B cell (primary cell): ENCODE measurements at regions of chr6 and their contacts with region 1.

Region 1: DNA sequence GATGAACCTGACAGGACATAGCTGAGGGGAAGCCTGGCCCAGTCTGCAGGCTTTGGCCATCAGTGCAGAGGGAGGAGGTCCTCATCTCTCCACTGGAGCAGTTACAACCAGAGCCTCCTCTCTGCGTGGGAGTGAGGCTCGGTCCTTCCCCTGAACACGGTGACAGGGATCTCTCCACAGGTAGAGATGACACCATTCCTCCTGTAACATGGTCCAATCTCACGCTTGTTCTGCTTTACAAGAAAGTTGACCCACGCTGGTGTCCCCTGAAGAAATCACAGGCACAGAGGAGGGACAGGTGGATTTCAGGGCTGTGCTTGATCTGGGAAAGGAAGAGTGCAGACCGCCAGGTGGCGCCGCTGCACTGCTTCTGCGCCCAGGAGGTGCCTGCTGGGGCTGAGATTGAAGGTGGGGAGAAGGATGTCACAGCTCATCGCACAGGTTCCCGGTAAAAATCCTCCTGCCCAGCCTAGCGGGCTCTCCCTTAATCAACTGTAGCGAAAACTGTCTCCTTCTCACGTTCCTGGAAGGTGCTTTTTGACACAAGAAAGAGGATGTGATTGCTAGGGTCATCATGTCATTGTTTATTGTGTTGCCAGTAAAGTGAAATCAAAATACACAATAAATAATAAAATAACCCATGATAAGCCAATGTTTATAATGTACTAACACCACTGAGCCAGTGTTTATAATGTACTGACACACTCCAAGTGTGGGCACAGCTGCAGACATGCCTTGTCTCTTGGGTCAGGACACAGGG is 20.4 kb downstream of the HLA-G start:
- DNase-seq: peak; percentile 85
- ATAC-seq: peak; percentile 85
- H3K4me3 ChIP-seq: no peak overlapping the region
- H3K4me3 Mint-ChIP-seq: no peak overlapping the region
- H3K27ac ChIP-seq: no peak overlapping the region
- H3K27ac Mint-ChIP-seq: no peak overlapping the region
- H3K4me1 ChIP-seq: peaks cover 6 to 11% of the 10 kb centered on the region in 2 donors
- H3K4me1 Mint-ChIP-seq: peaks cover 9% of the 10 kb centered on the region
- H3K27me3 ChIP-seq: peaks cover 0 to 63% (median 45%) of the 10 kb centered on the region in 4 experiments
- H3K27me3 Mint-ChIP-seq: peaks cover 66% of the 10 kb centered on the region
- CTCF ChIP-seq: peak; percentile 92

Region 2: DNA sequence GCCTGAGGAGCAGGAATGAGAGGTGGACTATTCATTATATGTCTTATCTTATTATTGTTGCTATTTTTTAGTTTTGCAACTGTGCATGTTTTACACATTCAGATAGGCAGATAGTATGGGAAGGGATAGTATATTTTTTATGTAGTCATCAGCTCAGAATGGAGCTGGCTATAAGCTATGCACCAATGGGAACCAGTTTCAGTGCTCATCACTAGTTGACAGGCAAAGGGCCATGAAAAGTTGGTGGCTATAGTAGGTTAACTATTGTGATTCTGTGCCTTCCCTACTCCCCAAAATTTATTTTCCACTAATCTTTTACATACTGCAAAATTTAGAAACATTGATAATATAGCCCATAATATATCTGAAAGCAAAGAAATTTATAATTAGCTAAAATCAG is 283.2 kb before region 1 on chr6:
- CTCF ChIA-PET with region 1: no interaction called
- POLR2A ChIA-PET with region 1: no interaction called
- intact Hi-C with region 1: no loop called
- DNase-seq: peak; percentile 25
- ATAC-seq: no peak
- H3K4me3 ChIP-seq: no peak overlapping the region
- H3K4me3 Mint-ChIP-seq: no peak overlapping the region
- H3K27ac ChIP-seq: no peak overlapping the region
- H3K27ac Mint-ChIP-seq: no peak overlapping the region
- H3K4me1 ChIP-seq: peaks cover 9 to 10% of the 10 kb centered on the region in 2 donors
- H3K4me1 Mint-ChIP-seq: peaks cover 15% of the 10 kb centered on the region
- H3K27me3 ChIP-seq: peaks cover 0 to 3% (median 0%) of the 10 kb centered on the region in 4 experiments
- H3K27me3 Mint-ChIP-seq: peaks cover 21% of the 10 kb centered on the region
- CTCF ChIP-seq: no peak

Region 3: GRCh38 chr6:30006170-30007131 is 158.4 kb after region 1 on chr6:
- CTCF ChIA-PET with region 1: interaction called, 90 read pairs
- POLR2A ChIA-PET with region 1: no interaction called
- intact Hi-C with region 1: no loop called
- DNase-seq: peak; percentile 53
- ATAC-seq: peak; percentile 51
- H3K4me3 ChIP-seq: peak overlapping the region; percentile 15 to 69 (median 59)
- H3K4me3 Mint-ChIP-seq: peak overlapping the region; percentile 82
- H3K27ac ChIP-seq: peak overlapping the region in 1 of 2 donors; percentile 49
- H3K27ac Mint-ChIP-seq: no peak overlapping the region
- H3K4me1 ChIP-seq: peaks cover 19 to 20% of the 10 kb centered on the region in 2 donors
- H3K4me1 Mint-ChIP-seq: peaks cover 18% of the 10 kb centered on the region
- H3K27me3 ChIP-seq: peaks cover 0 to 37% (median 20%) of the 10 kb centered on the region in 4 experiments
- H3K27me3 Mint-ChIP-seq: peaks cover 21% of the 10 kb centered on the region
- CTCF ChIP-seq: no peak

Region 4: DNA sequence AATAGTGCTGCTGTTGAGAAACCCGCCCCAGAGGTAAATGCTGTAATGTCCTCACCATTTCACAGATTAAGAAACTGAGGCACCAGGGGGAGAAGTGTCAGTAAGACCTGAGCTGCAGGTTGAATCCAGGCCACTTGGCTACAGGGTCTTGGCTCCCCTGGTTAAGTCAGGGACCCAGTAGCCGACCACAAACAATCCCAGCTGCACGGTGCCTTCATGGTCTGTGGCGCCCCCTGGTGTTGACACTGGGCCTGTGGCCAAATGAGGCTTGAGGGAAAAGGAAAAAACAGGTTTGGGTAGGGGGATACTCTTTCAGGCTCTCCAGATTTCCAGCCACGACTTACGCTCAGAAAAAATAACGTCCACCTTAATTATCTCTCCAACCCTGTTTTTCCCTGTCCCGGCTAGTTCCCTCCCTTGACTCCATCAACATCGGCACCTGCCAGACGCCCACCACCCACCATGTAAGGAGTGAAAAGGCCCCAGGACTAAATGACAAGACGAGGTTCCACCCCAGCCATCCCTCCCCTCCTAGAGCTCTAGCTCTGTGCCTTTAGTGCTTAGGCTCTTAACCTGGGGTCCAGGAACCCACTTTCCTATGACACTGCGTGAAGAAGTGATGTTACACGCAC is 165.4 kb after region 1 on chr6:
- CTCF ChIA-PET with region 1: interaction called, 90 read pairs
- POLR2A ChIA-PET with region 1: interaction called, 6 read pairs
- intact Hi-C with region 1: loop called (anchors 1 kb)
- DNase-seq: peak; percentile 63
- ATAC-seq: peak; percentile 43
- H3K4me3 ChIP-seq: no peak overlapping the region
- H3K4me3 Mint-ChIP-seq: no peak overlapping the region
- H3K27ac ChIP-seq: no peak overlapping the region
- H3K27ac Mint-ChIP-seq: no peak overlapping the region
- H3K4me1 ChIP-seq: peaks cover 0 to 2% of the 10 kb centered on the region in 2 donors
- H3K4me1 Mint-ChIP-seq: no peaks in the 10 kb centered on the region
- H3K27me3 ChIP-seq: peaks cover 0 to 4% (median 0%) of the 10 kb centered on the region in 4 experiments
- H3K27me3 Mint-ChIP-seq: peaks cover 3% of the 10 kb centered on the region
- CTCF ChIP-seq: peak; percentile 79

Region 5: DNA sequence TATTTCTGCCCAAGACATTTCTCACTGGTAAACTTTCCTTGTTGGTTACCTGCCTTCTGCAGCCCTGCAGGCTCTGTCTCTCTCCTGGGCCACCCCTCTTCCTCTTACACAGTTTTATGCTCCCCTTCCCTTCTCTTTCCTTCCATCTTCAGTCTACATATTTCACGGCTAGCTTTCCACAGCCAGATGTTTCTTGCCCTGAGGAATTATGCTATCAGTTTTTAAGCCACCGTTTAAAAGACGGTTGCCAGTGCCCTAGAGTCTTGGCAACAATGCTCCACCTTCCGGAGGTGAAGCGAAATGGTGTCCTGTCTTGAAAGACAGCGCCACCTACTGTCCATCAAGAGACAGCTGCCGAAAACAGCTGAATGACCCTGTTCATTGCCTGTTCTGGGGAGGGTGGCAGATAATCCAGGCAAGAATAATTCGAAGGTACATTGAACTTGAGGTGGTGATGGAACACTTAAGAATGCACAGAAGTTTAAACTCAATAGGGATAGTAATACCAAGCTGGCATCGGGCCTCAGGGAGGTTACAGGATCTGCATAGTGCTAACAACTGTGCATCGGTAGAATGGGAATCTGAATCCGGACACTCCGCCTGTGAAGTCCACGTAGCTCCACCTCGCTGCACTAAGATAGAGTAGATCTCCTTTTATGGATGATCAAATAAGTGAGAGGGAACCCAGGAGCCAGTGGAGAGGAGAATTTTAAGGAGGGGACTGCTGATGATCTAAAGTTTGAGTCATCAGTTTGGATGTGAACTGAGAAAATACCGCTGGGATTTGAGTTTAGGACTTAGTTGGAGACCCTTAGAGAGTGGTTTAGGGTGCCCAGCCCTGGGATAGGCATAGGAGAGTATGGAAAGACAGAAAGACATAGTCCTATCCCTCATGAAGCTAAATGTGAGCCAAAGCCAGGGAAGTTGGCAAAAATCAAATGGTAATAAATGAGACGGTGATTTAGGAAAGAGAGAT is 283.1 kb after region 1 on chr6:
- CTCF ChIA-PET with region 1: interaction called, 28 read pairs
- POLR2A ChIA-PET with region 1: no interaction called
- intact Hi-C with region 1: loop called (anchors 1 kb)
- DNase-seq: peak; percentile 87
- ATAC-seq: peak; percentile 92
- H3K4me3 ChIP-seq: no peak overlapping the region
- H3K4me3 Mint-ChIP-seq: no peak overlapping the region
- H3K27ac ChIP-seq: no peak overlapping the region
- H3K27ac Mint-ChIP-seq: no peak overlapping the region
- H3K4me1 ChIP-seq: peaks cover 13 to 18% of the 10 kb centered on the region in 2 donors
- H3K4me1 Mint-ChIP-seq: peaks cover 12% of the 10 kb centered on the region
- H3K27me3 ChIP-seq: peaks cover 0 to 55% (median 46%) of the 10 kb centered on the region in 4 experiments
- H3K27me3 Mint-ChIP-seq: peaks cover 60% of the 10 kb centered on the region
- CTCF ChIP-seq: peak; percentile 100